Posterior cingulate gyrus (tissue), 11 donors: ENCODE measurements at regions of chr1 and their contacts with region 1.

Region 1: DNA sequence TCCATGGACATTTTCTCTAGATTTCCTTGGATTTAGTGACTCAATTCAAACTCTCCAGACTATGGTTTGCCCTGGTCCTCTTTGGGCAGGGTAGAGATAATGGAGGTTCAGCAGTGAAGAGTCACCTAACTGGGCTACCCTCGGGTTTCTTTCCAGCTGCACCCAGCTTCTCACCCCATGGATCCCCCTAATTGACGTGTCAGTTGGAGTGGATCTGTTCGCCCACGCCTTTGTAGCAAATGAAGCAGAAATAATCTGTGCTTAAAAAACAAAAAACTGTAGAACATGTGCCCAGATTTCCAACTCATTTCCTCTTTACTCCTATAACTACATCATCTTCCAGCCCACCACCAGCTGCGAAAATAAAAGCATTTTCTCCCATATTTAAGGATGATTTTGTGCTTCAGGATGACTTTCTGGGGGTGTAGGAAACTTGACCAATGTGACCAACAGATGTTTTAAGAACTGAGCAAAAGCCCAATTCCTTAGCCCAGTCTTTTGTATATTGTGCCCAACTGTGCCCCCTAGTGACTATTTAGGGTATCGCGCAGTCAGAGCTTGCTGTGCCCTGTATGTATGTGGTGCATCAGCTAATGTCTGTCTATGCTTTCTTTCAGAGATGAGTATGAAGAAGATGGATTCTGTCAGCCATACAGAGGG is 66.5 kb upstream of the UBE2U start:
- DNase-seq: peak; percentile 48 to 95 (median 82)

Region 2: GRCh38 chr1:63615768-63616420 is 521.0 kb before region 1 on chr1:
- intact Hi-C with region 1: loop called (anchors 5 kb)
- DNase-seq: peak in 5 of 10 donors; percentile 19 to 75 (median 36)

Region 3: DNA sequence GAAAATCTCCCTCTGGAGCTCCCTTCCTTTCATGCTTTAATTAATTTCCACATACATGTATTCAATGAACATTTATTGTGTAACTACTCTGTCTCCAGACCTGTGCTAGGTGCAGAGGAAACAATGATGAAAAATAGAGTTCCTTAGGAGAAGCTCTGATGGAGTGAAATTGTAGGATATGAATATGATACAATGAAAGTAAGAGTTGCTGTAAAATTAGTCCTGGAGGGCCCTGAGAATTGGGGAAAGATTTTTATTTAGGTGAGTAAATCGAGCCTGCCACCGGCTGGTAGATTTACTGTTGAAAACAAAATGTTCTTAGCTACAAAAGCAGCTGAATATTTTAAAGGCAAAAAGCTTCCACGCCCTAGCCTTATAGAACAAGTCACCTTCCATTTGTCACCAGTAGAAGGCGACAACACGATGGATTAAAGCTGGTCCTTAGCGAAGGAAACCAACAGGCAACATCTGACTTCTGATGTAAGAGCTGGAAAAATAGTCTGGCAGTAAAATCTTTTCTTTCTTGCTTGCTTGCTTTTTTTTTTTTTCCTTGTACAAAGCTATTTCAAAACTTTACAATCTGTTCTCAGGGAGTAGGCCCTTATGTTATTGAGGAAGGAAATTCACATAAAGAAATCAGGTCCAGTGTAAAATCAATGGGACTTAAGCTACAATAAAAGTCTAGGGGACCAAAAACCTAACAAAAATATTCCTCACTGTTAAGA is 445.0 kb before region 1 on chr1:
- intact Hi-C with region 1: loop called (anchors 2 kb)
- DNase-seq: peak in 2 of 10 donors; percentile 31 to 51

Region 4: DNA sequence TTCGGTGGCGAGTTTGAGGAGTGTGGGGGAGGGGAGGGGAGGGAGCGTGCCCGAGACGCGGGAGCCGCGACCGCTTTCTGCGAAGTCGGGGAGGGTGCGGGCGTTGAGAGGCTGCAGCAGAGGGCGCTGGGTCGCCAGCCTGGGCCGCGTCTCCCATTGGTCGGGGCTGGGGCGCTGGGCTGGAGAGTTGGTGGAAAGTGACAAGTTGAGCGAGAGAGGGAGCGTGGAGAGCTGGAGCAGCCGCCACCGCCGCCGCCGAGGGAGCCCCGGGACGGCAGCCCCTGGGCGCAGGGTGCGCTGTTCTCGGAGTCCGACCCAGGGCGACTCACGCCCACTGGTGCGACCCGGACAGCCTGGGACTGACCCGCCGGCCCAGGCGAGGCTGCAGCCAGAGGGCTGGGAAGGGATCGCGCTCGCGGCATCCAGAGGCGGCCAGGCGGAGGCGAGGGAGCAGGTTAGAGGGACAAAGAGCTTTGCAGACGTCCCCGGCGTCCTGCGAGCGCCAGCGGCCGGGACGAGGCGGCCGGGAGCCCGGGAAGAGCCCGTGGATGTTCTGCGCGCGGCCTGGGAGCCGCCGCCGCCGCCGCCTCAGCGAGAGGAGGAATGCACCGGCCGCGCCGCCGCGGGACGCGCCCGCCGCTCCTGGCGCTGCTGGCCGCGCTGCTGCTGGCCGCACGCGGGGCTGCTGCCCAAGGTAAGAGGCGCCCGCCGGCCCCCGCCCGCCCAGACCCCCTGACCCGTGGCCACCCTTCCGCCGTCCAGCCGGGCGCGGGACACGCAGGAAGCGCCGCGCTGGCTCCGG is 362.9 kb before region 1 on chr1 and contains the start of gene ROR1:
- intact Hi-C with region 1: loop called (anchors 10 kb)
- DNase-seq: peak; percentile 74 to 97 (median 84)